HCT116 (cell line): ENCODE measurements at regions of chr17 and their contacts with region 1.

Region 1: DNA sequence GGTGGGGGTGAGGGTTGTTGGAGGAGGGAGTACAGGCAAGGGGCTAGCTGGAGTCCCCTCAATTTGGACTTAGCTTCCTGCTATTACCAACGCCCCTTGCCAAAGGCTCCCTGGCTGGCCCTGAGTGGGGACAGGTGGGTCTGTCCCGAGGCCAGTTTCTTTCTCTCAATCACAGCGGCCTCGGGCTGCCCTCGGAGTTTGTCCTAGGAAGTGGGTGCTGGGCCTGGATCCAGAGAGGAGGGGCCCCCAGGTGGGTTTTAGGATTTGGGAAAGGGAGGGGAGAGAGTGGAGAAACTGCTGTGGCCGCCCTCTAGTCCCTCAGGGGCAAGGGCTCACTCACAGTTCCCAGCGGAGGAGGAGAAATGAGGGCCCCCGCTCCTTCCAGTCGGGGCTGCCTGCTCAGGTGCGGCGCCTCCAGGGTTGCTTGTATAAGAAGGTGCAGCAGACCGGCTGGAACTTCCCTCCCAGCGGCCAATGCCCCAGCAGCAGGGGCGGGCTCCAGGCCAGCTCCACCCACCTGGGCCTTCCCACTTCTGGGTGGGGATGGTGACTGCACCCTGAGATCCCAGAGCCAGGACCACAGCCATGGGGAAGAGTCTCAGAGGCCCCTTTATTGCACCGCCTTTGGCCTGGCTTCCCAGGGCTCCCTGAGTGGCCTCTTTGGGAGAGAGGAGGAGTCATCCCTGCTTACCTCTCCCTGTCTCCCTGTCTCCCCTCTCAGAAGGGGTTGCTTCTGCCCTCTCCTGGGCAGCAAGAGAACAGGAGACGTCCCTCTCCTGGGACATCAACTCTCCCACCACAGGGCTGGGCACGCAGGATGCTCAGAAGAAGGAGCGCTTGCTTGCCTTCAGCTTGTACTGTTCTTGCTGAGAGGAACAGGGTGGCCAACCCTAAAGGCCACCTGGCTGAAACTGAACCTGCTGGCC is 112.0 kb upstream of the SMURF2 start:
- DNase-seq: peak; percentile 95
- ATAC-seq: peak; percentile 89
- H3K4me3 ChIP-seq: peak overlapping the region; percentile 80 to 89
- H3K27ac ChIP-seq: peak overlapping the region; percentile 73
- H3K4me1 ChIP-seq: peaks cover 17 to 42% of the 10 kb centered on the region in 2 experiments
- H3K27me3 ChIP-seq: no peaks in the 10 kb centered on the region
- CTCF ChIP-seq: peak; percentile 80 to 95 (median 89); a peak in 5 of 6 replicates
- POLR2A ChIP-seq: peak; percentile 81
- RAD21 ChIP-seq: peak; percentile 89

Region 2: GRCh38 chr17:64632606-64633005 is 141.5 kb before region 1 on chr17:
- CTCF ChIA-PET with region 1: no interaction called
- POLR2A ChIA-PET with region 1: no interaction called
- RAD21 ChIA-PET with region 1: no interaction called
- intact Hi-C with region 1: no loop called
- DNase-seq: no peak
- ATAC-seq: no peak
- H3K4me3 ChIP-seq: no peak overlapping the region
- H3K27ac ChIP-seq: no peak overlapping the region
- H3K4me1 ChIP-seq: peaks cover 13 to 75% of the 10 kb centered on the region in 2 experiments
- H3K27me3 ChIP-seq: no peaks in the 10 kb centered on the region
- CTCF ChIP-seq: no peak
- POLR2A ChIP-seq: no peak
- RAD21 ChIP-seq: no peak

Region 3: DNA sequence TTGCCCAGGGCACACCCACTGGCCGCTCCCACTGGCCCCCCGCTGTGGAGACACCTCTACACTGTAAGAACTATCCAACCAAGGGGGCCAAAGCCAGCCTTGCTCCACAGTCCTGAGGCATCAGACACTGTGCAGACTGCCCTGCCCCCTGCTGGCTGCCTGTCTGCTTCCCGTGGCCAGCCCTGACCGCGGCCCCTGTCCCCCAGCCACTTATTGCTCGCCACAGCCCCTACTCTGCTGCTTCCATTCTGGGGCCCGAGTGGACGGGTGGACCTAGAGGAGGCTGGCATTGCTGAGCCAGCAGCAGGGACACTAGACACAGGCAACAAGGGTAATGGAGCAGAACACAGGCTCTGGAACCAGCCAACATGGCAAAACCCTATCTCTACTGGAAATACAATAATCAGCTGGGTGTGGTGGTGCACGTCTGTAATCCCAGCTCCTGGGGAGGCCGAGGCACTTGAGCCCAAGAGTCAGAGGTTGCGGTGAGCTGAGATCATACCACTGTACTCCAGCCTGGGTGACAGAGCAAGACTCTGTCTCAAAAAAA is 164.9 kb after region 1 on chr17:
- CTCF ChIA-PET with region 1: interaction called, 5 read pairs
- POLR2A ChIA-PET with region 1: no interaction called
- RAD21 ChIA-PET with region 1: no interaction called
- intact Hi-C with region 1: loop called (anchors 5 kb)
- DNase-seq: no peak
- ATAC-seq: peak; percentile 82
- H3K4me3 ChIP-seq: no peak overlapping the region
- H3K27ac ChIP-seq: no peak overlapping the region
- H3K4me1 ChIP-seq: peaks cover 0 to 12% of the 10 kb centered on the region in 2 experiments; a peak in 2 of 4 replicates
- H3K27me3 ChIP-seq: no peaks in the 10 kb centered on the region
- CTCF ChIP-seq: peak; percentile 59 to 93 (median 78); a peak in 5 of 6 replicates
- POLR2A ChIP-seq: no peak
- RAD21 ChIP-seq: peak; percentile 74

Region 4: DNA sequence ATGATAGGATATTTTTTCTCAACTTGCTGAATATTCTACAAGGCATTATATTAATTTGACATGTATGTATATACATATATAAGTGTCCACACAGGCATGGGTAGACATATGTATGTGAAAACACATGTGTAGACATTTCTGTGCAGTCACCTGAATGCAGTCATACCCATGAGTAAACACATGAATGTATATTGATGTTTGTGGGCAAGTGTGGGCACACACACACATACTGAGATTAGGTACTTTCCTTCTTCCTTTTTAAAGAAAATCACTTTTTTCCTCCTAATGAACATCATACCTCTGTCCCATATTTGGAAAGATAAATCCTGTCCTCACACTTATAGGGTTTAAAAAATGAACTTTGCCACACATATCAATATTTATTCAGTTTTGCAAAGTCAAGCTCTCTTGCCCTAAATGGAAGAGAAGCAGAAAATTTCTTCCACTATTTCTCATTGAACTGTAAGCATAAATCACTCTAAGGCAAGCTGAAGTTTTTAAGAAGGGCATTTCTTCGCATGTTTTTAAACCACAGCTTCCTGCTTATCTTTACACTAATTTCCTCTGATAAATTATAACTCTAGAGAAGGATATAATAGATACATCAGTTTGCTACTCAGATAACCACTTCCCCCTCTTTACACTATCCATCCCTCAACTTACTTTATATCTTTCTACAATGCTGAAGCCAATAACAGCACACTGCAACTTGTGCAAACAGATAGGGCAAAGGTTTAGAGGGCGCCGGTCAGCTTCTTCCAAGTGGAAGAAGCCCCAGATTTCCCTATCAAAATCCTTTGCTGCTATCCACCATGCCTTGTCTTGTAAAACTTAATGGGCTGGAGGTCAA is 194.8 kb after region 1 on chr17:
- CTCF ChIA-PET with region 1: interaction called, 5 read pairs
- POLR2A ChIA-PET with region 1: no interaction called
- RAD21 ChIA-PET with region 1: no interaction called
- intact Hi-C with region 1: loop called (anchors 5 kb)
- DNase-seq: no peak
- ATAC-seq: no peak
- H3K4me3 ChIP-seq: no peak overlapping the region
- H3K27ac ChIP-seq: no peak overlapping the region
- H3K4me1 ChIP-seq: peaks cover 15 to 32% of the 10 kb centered on the region in 2 experiments
- H3K27me3 ChIP-seq: no peaks in the 10 kb centered on the region
- CTCF ChIP-seq: no peak; a peak in 1 of 6 replicates
- POLR2A ChIP-seq: no peak
- RAD21 ChIP-seq: peak; percentile 28; the same call in 1 of the 2 replicates

Region 5: GRCh38 chr17:65198653-65199382 is 424.7 kb after region 1 on chr17:
- CTCF ChIA-PET with region 1: no interaction called
- POLR2A ChIA-PET with region 1: no interaction called
- RAD21 ChIA-PET with region 1: no interaction called
- intact Hi-C with region 1: loop called (anchors 2 kb)
- DNase-seq: peak; percentile 62
- ATAC-seq: peak; percentile 75
- H3K4me3 ChIP-seq: no peak overlapping the region
- H3K27ac ChIP-seq: no peak overlapping the region
- H3K4me1 ChIP-seq: no peaks in the 10 kb centered on the region
- H3K27me3 ChIP-seq: no peaks in the 10 kb centered on the region
- CTCF ChIP-seq: peak; percentile 67 to 96 (median 90)
- POLR2A ChIP-seq: no peak
- RAD21 ChIP-seq: peak; percentile 97